Panc1 (cell line): ENCODE measurements at regions of chr6 and their contacts with region 1.

Region 1: GRCh38 chr6:36985808-36986703 is at the start of gene MTCH1:
- DNase-seq: no peak
- ATAC-seq: peak; percentile 95
- H3K4me3 ChIP-seq: peak within 1 kb of the TSS; percentile 72 to 97
- H3K27ac ChIP-seq: peak within 1 kb of the TSS; percentile 94
- H3K4me1 ChIP-seq: peaks cover 23% of the 10 kb centered on the region
- H3K27me3 ChIP-seq: no peaks in the 10 kb centered on the region
- CTCF ChIP-seq: no peak
- total RNA-seq, gene MTCH1: 223 TPM

Region 2: GRCh38 chr6:36786055-36786675 is 199.9 kb before region 1 on chr6:
- CTCF ChIA-PET with region 1: no interaction called
- POLR2A ChIA-PET with region 1: interaction called, 11 read pairs
- in situ Hi-C with region 1: no loop called
- intact Hi-C with region 1: no loop called
- DNase-seq: no peak
- ATAC-seq: no peak
- H3K4me3 ChIP-seq: no peak overlapping the region
- H3K27ac ChIP-seq: no peak overlapping the region
- H3K4me1 ChIP-seq: no peaks in the 10 kb centered on the region
- H3K27me3 ChIP-seq: no peaks in the 10 kb centered on the region
- CTCF ChIP-seq: no peak

Region 3: DNA sequence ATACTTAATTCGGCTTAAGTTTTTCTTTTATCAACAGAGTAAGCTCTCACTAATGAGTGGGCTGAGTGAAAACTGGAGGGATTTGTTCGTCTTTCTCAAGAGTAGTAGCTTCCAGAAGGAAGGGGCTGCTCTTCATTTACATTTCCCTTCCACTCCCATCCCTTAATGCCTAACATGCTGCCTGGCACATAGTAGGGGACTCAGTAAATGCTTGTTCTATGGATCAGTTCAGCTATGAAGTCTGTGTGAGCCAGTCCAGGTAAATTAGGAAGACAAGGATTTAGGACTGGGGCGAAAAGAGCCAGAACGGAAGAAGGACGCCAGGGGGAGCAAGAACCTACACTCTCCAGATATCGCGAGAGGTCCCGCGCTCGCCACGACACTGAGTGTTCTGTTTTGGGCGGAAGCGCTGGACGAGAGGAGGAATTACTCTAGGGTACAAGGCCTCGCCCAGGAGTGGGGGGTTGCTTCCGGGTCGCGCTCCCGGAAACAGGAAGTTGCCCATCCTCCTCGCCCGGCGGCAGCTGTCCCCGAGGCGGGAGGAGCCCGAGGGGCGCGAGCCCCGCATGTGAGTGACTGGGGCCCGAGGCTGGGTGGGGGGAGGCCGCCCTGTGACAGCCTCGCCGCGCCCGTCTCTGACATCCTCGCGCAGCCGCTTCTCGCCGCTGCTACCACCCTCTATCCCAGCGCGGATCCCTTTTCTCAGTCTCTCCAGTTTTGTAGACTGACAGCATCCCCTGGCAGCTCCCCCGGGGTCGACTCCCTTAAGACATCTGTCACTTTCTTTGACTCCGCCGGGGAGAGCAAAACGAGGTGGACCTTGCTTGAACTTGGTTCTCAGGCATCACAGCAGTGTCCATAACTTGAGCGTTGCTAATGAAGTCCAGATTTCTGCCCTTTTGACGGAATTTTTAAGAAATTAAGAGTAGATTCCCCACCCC is 100.3 kb before region 1 on chr6 and contains the start of gene C6orf89:
- CTCF ChIA-PET with region 1: no interaction called
- POLR2A ChIA-PET with region 1: no interaction called
- in situ Hi-C with region 1: no loop called
- intact Hi-C with region 1: loop called (anchors 10 kb)
- DNase-seq: peak; percentile 89
- ATAC-seq: peak; percentile 100
- H3K4me3 ChIP-seq: peak within 1 kb of the TSS; percentile 73 to 100
- H3K27ac ChIP-seq: peak within 1 kb of the TSS; percentile 98
- H3K4me1 ChIP-seq: peaks cover 8% of the 10 kb centered on the region; the same call in 1 of the 2 replicates
- H3K27me3 ChIP-seq: no peaks in the 10 kb centered on the region
- CTCF ChIP-seq: peak; percentile 89
- total RNA-seq, gene C6orf89: 59.2 TPM

Region 4: GRCh38 chr6:36940027-36940426 is 46.0 kb before region 1 on chr6:
- CTCF ChIA-PET with region 1: no interaction called
- POLR2A ChIA-PET with region 1: no interaction called
- in situ Hi-C with region 1: no loop called
- intact Hi-C with region 1: no loop called
- DNase-seq: no peak
- ATAC-seq: peak; percentile 50; the same call in 1 of the 2 replicates
- H3K4me3 ChIP-seq: no peak overlapping the region
- H3K27ac ChIP-seq: no peak overlapping the region
- H3K4me1 ChIP-seq: no peaks in the 10 kb centered on the region
- H3K27me3 ChIP-seq: no peaks in the 10 kb centered on the region
- CTCF ChIP-seq: no peak